Ascending aorta (tissue), 2 donors: ENCODE measurements at regions of chr9 and their contacts with region 1.

Region 1: DNA sequence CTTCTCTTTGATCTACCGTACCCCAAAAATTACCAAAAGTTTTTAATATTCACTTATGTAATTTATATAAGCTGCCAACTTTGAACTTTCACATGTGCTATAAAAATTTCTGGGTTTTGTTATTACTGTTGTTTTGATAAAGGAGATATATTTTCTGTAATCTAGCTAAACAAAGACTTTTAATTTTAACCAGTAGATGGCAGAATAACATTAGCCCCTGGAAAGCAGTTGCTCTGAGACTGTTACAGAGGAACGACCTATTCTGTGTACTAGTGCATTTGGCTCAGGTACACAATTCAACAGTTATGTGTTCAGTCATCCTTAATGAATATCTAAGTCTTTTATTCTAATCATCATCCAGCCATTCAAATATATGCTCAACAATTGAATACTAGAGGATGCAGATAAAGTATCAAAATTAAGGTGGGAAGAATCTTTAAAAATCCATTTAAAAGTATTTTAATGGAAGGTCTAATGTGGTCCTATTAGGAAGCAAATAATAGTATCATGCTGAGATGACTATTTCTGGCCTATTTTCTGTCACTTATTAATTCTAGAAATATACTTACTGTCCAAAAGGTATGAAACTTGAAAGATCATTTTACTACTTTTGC is 8.6 kb downstream of the KLHL9 start:
- DNase-seq: no peak
- H3K4me3 ChIP-seq: no peak overlapping the region
- H3K27ac ChIP-seq: no peak overlapping the region
- H3K4me1 ChIP-seq: peaks cover 4 to 13% of the 10 kb centered on the region in 2 donors
- H3K27me3 ChIP-seq: no peaks in the 10 kb centered on the region
- CTCF ChIP-seq: peak; percentile 30 to 69 (median 63)

Region 2: GRCh38 chr9:21357479-21358460 is 31.1 kb after region 1 on chr9:
- intact Hi-C with region 1: no loop called
- DNase-seq: no peak
- H3K4me3 ChIP-seq: no peak overlapping the region
- H3K27ac ChIP-seq: no peak overlapping the region
- H3K4me1 ChIP-seq: no peaks in the 10 kb centered on the region
- H3K27me3 ChIP-seq: no peaks in the 10 kb centered on the region
- CTCF ChIP-seq: no peak

Region 3: GRCh38 chr9:21789541-21790037 is 463.0 kb after region 1 on chr9:
- intact Hi-C with region 1: loop called (anchors 2 kb)
- DNase-seq: peak in 1 of 2 donors; percentile 75
- H3K4me3 ChIP-seq: peak overlapping the region in 1 of 2 donors; percentile 49
- H3K27ac ChIP-seq: no peak overlapping the region
- H3K4me1 ChIP-seq: no peaks in the 10 kb centered on the region
- H3K27me3 ChIP-seq: no peaks in the 10 kb centered on the region
- CTCF ChIP-seq: peak; percentile 67 to 84 (median 80)